ENCODE measurements at regions of chr20 and their contacts with region 1.

Region 1: DNA sequence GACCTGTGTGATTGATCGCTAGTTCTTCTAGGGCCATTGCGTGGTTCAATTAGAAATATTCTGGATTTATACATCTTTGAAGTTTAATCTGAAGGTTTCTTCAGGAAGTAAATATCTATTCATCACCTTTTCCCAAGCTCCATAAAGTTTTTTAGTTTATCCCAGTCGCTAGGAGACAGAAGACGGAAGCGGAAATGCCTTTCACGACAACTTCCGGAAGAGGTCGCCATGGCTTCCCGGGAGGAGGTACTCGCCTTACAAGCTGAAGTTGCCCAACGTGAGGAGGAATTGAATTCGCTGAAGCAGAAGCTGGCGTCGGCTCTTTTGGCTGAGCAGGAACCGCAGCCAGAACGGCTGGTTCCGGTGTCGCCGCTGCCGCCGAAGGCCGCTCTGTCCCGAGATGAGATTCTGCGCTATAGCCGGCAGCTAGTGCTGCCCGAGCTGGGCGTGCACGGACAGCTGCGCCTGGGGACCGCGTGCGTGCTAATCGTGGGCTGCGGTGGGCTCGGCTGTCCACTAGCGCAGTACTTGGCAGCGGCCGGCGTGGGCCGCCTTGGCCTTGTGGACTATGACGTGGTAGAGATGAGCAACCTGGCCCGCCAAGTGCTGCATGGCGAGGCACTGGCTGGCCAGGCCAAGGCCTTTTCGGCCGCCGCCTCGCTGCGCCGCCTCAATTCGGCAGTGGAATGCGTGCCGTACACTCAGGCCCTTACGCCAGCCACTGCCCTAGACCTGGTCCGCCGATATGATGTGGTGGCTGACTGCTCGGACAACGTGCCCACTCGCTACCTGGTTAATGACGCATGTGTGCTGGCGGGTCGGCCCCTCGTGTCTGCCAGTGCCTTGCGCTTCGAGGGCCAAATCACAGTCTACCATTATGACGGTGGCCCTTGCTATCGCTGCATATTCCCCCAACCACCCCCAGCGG is at the start of gene MOCS3:
- DNase-seq: peak; percentile 77 to 91 (median 88)
- H3K4me3 ChIP-seq: peak within 1 kb of the TSS; percentile 72 to 100 (median 98)
- H3K27ac ChIP-seq: peak within 1 kb of the TSS; percentile 84 to 99 (median 95)
- H3K27me3 ChIP-seq: no peaks in the 10 kb centered on the region
- CTCF ChIP-seq: peak in 16 of 56 donors; percentile 5 to 45 (median 20)
- total RNA-seq, gene MOCS3: 3.1 to 7.1 (median 4.6) TPM

Region 2: GRCh38 chr20:50904067-50904570 is 54.8 kb before region 1 on chr20:
- intact Hi-C with region 1: no loop called
- DNase-seq: no peak
- H3K4me3 ChIP-seq: no peak overlapping the region
- H3K27ac ChIP-seq: peak overlapping the region in 5 of 59 donors; percentile 2 to 26 (median 19)
- H3K27me3 ChIP-seq: no peaks in the 10 kb centered on the region
- CTCF ChIP-seq: no peak

Region 3: DNA sequence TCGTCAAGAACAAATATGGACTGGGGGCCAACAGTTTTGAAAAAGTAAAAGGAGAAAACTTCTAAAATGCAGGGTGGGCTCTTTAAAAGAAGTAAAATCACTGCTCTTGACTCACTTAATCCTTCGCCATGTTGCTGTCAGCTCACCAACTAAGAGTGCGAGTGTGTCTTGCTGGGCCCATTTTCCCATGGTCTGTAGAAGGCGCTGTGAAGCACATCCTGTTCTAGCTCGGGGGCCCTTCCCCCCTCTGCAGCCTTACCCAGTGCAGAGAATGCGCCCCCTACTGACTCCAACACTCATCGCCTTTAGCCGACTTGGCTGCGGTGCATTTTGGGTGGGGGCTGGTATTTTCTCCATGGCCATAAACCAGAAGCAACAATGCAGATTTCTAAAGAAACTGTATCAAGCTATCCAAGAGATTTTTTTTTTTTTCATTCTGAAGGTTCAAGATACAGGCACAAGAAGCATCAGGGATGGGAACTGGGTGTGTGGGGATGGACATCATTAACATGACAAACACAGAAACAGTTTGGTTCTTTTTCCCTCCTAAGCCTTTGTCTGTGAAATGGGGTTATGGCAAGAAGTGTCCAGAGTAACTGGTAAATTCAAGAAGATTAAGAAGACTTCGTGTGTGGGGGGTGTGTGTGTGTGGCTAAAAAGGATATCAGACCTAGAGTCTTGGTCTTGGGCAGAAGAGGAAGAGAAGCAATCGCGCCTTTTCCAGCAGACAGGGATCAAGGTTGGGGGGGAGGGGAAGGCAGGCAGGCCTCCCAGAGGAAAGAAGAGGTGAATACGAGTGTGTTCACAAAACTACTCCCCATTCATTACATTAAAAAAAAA is 29.4 kb before region 1 on chr20:
- intact Hi-C with region 1: loop called (anchors 2 kb)
- DNase-seq: peak; percentile 73 to 98 (median 89)
- H3K4me3 ChIP-seq: peak overlapping the region; percentile 51 to 93 (median 79)
- H3K27ac ChIP-seq: peak overlapping the region in 58 of 59 donors; percentile 25 to 100 (median 84)
- H3K27me3 ChIP-seq: no peaks in the 10 kb centered on the region
- CTCF ChIP-seq: peak; percentile 66 to 98 (median 93)

Region 4: DNA sequence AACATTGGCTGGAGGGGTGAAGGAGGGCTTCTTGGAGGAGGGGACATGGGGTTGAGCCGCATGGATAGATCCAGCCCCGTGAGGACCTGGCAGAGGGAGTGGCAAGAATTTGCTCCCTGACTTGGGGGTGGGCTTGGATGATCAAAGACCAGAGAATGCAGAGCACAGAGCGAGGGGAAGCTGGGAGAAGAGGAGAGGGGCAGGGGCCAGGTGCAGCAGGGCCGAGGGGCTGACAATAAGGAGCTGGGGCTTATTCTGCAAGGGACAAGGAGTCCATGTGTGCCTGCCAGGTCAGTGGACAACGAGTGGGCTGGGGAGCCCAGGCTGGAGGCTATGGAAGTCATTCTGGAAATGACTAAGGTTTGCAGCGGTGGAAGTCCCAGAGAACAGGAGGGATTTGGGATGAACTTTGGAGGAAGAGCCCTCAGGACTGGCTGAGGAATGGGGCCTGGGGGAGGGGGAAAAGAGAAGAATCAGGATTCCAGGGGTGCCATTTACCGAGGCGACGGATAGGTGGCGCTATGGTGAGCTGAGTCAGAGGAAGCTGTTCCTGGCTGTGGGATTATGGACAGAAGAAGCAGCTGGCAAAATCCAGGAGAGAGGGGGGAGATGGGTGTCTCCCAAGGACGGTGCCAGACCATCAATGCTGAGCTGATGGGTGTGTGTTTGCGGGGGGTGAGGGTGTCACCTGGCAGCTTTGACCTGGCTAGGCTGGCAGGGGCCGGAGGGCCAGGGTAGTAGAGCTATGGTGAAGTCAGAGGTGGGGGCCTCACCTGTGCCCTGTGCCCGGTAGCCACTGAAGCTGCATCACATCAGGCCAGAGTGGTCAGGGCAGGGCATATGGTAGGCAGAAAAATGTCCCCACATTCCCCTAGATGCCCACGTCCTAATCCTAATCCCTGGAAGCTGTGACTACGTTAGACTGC is 56.2 kb after region 1 on chr20:
- intact Hi-C with region 1: no loop called
- DNase-seq: peak in 6 of 10 donors; percentile 26 to 66 (median 54)
- H3K4me3 ChIP-seq: no peak overlapping the region
- H3K27ac ChIP-seq: no peak overlapping the region
- H3K27me3 ChIP-seq: peaks cover 0 to 10% (median 0%) of the 10 kb centered on the region in 45 donors
- CTCF ChIP-seq: peak; percentile 28 to 72 (median 60)

Measured in dorsolateral prefrontal cortex (tissue), 120 donors.